ENCODE measurements at regions of chr6 and their contacts with region 1.

Region 1: GRCh38 chr6:135506270-135506997 is 8.9 kb upstream of the AHI1 start:
- DNase-seq: no peak
- H3K4me3 Mint-ChIP-seq: no peak overlapping the region
- H3K27ac Mint-ChIP-seq: peak overlapping the region; percentile 89
- H3K4me1 Mint-ChIP-seq: peaks cover 34% of the 10 kb centered on the region
- H3K27me3 Mint-ChIP-seq: no peaks in the 10 kb centered on the region

Region 2: GRCh38 chr6:135521431-135521830 is 15.0 kb after region 1 on chr6:
- intact Hi-C with region 1: loop called (anchors 2 kb)
- DNase-seq: no peak
- H3K4me3 Mint-ChIP-seq: no peak overlapping the region
- H3K27ac Mint-ChIP-seq: no peak overlapping the region
- H3K4me1 Mint-ChIP-seq: peaks cover 29% of the 10 kb centered on the region
- H3K27me3 Mint-ChIP-seq: no peaks in the 10 kb centered on the region

Region 3: GRCh38 chr6:135557582-135557981 is 51.1 kb after region 1 on chr6:
- intact Hi-C with region 1: no loop called
- DNase-seq: no peak
- H3K4me3 Mint-ChIP-seq: no peak overlapping the region
- H3K27ac Mint-ChIP-seq: peak overlapping the region; percentile 70
- H3K4me1 Mint-ChIP-seq: peaks cover 60% of the 10 kb centered on the region
- H3K27me3 Mint-ChIP-seq: no peaks in the 10 kb centered on the region

Region 4: DNA sequence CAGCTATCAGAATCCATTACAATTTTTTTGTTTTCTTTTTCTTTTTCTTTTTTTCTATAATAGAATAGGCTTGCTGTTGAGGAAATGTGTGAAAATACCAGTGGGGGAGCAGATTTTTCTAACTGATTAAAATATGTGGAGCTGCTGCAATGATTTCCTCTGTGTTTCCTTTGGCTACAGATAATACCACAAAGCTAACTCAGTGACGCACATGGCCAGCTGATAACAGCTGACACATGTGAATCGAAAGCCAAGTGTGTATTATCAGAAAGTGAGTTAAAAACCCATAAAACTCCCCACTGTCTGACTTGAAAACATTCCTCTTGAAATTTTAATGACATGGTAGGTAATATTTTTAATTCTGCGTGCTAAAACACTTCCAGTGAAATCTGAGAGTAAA is 61.9 kb after region 1 on chr6:
- intact Hi-C with region 1: loop called (anchors 2 kb)
- DNase-seq: peak; percentile 66
- H3K4me3 Mint-ChIP-seq: no peak overlapping the region
- H3K27ac Mint-ChIP-seq: peak overlapping the region; percentile 94
- H3K4me1 Mint-ChIP-seq: peaks cover 71% of the 10 kb centered on the region
- H3K27me3 Mint-ChIP-seq: no peaks in the 10 kb centered on the region

Region 5: DNA sequence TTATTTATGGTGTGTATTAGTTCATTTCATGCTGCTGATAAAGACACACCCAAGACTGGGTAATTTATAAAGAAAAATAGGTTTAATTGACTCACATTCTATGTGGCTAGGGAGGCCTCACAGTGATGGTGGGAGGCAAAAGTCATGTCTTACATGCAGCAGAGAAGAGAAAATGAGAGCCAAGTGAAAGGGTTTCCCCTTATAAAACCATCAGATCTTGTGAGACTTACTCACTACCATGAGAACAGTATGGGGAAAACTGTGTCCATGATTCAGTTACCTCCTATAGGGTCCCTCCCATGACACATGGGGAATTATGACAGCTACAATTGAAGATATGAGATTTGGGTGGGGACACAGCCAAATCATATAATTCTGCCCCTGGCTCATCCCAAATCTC is 141.1 kb after region 1 on chr6:
- intact Hi-C with region 1: loop called (anchors 1 kb)
- DNase-seq: no peak
- H3K4me3 Mint-ChIP-seq: peak overlapping the region; percentile 92
- H3K27ac Mint-ChIP-seq: peak overlapping the region; percentile 97
- H3K4me1 Mint-ChIP-seq: peaks cover 58% of the 10 kb centered on the region
- H3K27me3 Mint-ChIP-seq: no peaks in the 10 kb centered on the region

Region 6: GRCh38 chr6:135703621-135704020 is 197.2 kb after region 1 on chr6:
- intact Hi-C with region 1: loop called (anchors 1 kb)
- DNase-seq: peak; percentile 15
- H3K4me3 Mint-ChIP-seq: peak overlapping the region; percentile 35
- H3K27ac Mint-ChIP-seq: peak overlapping the region; percentile 90
- H3K4me1 Mint-ChIP-seq: peaks cover 41% of the 10 kb centered on the region
- H3K27me3 Mint-ChIP-seq: peaks cover 5% of the 10 kb centered on the region

Region 7: DNA sequence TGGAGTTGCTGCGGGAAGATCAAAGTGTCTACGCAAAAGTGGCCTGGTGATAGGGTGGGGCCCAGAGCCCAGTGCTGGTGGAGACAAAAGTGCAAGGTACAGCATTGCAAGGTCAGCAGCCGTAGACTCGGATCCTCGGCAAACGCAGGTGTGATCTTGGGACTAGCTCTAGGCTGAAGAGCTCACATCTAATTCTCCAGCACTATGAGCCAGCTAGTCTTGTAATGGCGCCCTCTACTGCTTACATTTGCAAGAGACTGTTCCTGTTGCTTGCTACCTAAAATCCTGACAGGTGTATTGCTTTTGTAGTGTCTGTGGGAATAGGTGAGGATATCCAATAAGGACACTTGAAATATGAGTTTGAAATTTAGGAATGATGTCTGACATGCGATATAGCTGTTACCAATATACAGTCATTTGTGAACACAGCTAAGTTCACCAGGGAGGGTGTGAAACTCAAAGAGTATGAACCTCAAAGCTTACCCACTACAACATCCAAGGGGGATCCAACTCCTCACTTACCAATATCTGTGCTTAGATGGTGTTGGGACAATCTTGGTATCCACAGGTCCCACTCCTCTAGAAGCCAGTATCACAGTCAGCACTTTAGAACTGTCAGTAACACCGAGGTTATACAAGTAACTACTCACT is 403.4 kb after region 1 on chr6:
- intact Hi-C with region 1: loop called (anchors 5 kb)
- DNase-seq: peak; percentile 51
- H3K4me3 Mint-ChIP-seq: no peak overlapping the region
- H3K27ac Mint-ChIP-seq: no peak overlapping the region
- H3K4me1 Mint-ChIP-seq: peaks cover 47% of the 10 kb centered on the region
- H3K27me3 Mint-ChIP-seq: no peaks in the 10 kb centered on the region

Region 8: DNA sequence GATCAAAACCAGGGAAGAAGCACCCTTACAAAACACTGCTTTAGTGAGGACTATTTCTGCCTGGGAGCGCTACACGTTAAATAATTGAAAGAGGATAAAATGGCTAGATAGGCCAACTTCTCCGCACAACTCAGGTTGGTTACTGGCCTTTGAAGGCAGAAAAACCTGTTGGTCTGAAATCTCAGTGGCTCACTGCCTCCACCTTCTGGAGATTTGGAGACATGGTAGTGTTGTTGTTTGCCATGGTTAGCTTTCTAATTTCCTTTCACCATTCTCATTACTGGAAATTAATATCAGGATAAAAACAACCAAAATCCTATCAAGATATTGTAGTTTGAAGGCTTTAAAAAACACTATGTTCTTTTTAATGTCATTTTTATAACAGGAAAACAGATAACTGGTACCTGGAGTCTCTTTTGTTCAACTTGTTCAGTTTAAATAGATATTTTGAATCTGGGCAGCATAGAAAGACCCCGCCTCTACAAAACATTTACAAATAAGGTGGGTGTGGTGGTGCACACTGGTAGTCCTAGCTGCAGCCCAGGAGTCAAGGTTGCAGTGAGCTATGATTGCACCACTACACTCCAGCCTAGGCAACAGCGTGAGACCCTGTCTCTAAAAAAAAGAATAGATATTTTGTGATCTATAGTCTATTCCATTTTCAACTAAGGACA is 810.7 kb after region 1 on chr6:
- intact Hi-C with region 1: loop called (anchors 5 kb)
- DNase-seq: peak; percentile 41
- H3K4me3 Mint-ChIP-seq: no peak overlapping the region
- H3K27ac Mint-ChIP-seq: no peak overlapping the region
- H3K4me1 Mint-ChIP-seq: peaks cover 8% of the 10 kb centered on the region
- H3K27me3 Mint-ChIP-seq: peaks cover 12% of the 10 kb centered on the region

Measured in activated T-helper 2 cell treated with anti-CD3 and anti-CD28 coated beads, Interferon-gamma antibody, Interleukin-2, Interleukin-4, amounts not matched to agents 10 μg/mL and 5 μg/mL and 100 μg/mL, durations not matched to agents 14 hours and 24 hours and 36 hours (primary cell).